H1 (cell line): ENCODE measurements at regions of chr6 and their contacts with region 1.

Region 1: GRCh38 chr6:152630832-152631231 is 6.3 kb downstream of the SYNE1 start:
- DNase-seq: no peak
- H3K4me3 ChIP-seq: no peak overlapping the region
- H3K27ac ChIP-seq: no peak overlapping the region
- H3K4me1 ChIP-seq: peaks cover 0 to 2% (median 0%) of the 10 kb centered on the region in 4 experiments; a peak in 2 of 7 replicates
- H3K27me3 ChIP-seq: peaks cover 1 to 8% (median 5%) of the 10 kb centered on the region in 4 experiments
- CTCF ChIP-seq: no peak
- EP300 ChIP-seq: no peak
- POLR2A ChIP-seq: no peak
- RAD21 ChIP-seq: no peak

Region 2: DNA sequence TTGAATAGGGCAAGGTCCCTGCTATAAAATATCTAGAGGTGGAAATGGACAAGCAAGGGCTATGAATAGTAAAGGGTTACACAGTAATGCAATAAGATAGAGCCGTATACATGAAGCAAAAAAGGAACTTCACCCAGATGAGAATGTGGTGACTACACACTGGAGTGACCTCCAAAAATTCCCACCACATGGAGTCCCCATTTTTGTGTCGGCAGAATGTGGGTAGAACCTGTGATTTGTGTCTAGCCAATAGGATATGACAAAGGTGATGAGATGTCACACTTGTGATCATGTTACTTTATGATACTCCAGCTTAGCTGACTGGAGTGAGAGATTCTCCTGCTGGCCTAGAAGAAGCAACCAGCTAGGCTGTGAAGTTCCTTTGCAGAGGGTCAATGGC is 90.5 kb before region 1 on chr6:
- CTCF ChIA-PET with region 1: no interaction called
- POLR2A ChIA-PET with region 1: no interaction called
- DNase-seq: no peak
- H3K4me3 ChIP-seq: no peak overlapping the region
- H3K27ac ChIP-seq: no peak overlapping the region
- H3K4me1 ChIP-seq: no peaks in the 10 kb centered on the region
- H3K27me3 ChIP-seq: no peaks in the 10 kb centered on the region
- CTCF ChIP-seq: no peak
- EP300 ChIP-seq: no peak
- POLR2A ChIP-seq: no peak
- RAD21 ChIP-seq: no peak

Region 3: DNA sequence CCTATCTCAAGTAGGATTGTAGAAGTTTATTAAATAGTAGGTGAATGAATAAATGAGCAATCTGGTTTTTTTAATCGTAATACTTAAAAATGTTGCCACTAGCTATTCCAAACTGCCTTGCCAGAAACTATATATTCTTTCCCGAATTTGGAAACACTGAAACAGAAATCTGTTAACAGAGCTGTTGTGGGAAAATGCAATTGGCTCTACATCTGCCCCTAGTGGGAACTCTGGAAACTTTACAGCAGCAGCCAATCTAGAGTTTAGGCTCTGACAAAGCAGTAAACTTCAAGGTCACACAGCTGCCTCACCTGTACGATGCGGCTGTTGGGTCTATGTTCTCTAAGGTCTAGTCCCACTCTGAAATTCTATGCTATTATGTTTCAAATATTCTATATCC is 35.3 kb before region 1 on chr6:
- CTCF ChIA-PET with region 1: interaction called, 13 read pairs
- POLR2A ChIA-PET with region 1: no interaction called
- DNase-seq: no peak
- H3K4me3 ChIP-seq: no peak overlapping the region
- H3K27ac ChIP-seq: no peak overlapping the region
- H3K4me1 ChIP-seq: no peaks in the 10 kb centered on the region
- H3K27me3 ChIP-seq: no peaks in the 10 kb centered on the region
- CTCF ChIP-seq: peak in 2 of 3 experiments; percentile 30 to 54; a peak in 3 of 4 replicates
- EP300 ChIP-seq: no peak
- POLR2A ChIP-seq: no peak
- RAD21 ChIP-seq: peak in 1 of 2 experiments; percentile 17; a peak in 1 of 4 replicates

Region 4: DNA sequence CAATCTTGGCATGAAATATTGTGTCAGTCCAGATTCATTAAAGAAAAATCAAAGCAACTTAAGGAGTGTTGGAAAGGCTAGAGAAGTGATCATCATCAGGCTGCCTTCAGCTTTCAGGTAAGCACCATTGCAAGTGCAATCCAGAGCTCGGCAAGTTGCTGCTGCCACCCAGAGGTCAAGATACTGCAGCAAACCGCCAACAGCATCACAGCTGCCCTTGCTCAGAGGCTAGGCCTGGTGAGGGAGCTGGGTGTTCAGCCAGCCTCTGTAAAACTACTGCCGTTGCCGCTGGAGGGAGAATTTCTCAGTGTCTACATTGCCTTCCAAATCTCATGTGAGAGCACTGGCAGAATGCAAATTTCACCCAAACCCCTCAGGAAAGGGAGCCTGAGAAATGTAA is 12.2 kb after region 1 on chr6:
- CTCF ChIA-PET with region 1: interaction called, 28 read pairs
- POLR2A ChIA-PET with region 1: no interaction called
- DNase-seq: peak; percentile 60 to 61
- H3K4me3 ChIP-seq: no peak overlapping the region
- H3K27ac ChIP-seq: no peak overlapping the region
- H3K4me1 ChIP-seq: no peaks in the 10 kb centered on the region
- H3K27me3 ChIP-seq: peaks cover 2 to 10% (median 6%) of the 10 kb centered on the region in 4 experiments; a peak in 6 of 7 replicates
- CTCF ChIP-seq: peak; percentile 84 to 93 (median 91)
- EP300 ChIP-seq: no peak
- POLR2A ChIP-seq: no peak
- RAD21 ChIP-seq: peak; percentile 89 to 90

Region 5: GRCh38 chr6:152701081-152701862 is 70.4 kb after region 1 on chr6:
- CTCF ChIA-PET with region 1: no interaction called
- POLR2A ChIA-PET with region 1: no interaction called
- DNase-seq: no peak
- H3K4me3 ChIP-seq: no peak overlapping the region
- H3K27ac ChIP-seq: no peak overlapping the region
- H3K4me1 ChIP-seq: no peaks in the 10 kb centered on the region
- H3K27me3 ChIP-seq: peaks cover 0 to 1% (median 0%) of the 10 kb centered on the region in 4 experiments; a peak in 1 of 7 replicates
- CTCF ChIP-seq: peak in 2 of 3 experiments; percentile 16 to 44; a peak in 2 of 4 replicates
- EP300 ChIP-seq: no peak
- POLR2A ChIP-seq: no peak
- RAD21 ChIP-seq: peak; percentile 68 to 70